ENCODE measurements at regions of chr7 and their contacts with region 1.

Region 1: DNA sequence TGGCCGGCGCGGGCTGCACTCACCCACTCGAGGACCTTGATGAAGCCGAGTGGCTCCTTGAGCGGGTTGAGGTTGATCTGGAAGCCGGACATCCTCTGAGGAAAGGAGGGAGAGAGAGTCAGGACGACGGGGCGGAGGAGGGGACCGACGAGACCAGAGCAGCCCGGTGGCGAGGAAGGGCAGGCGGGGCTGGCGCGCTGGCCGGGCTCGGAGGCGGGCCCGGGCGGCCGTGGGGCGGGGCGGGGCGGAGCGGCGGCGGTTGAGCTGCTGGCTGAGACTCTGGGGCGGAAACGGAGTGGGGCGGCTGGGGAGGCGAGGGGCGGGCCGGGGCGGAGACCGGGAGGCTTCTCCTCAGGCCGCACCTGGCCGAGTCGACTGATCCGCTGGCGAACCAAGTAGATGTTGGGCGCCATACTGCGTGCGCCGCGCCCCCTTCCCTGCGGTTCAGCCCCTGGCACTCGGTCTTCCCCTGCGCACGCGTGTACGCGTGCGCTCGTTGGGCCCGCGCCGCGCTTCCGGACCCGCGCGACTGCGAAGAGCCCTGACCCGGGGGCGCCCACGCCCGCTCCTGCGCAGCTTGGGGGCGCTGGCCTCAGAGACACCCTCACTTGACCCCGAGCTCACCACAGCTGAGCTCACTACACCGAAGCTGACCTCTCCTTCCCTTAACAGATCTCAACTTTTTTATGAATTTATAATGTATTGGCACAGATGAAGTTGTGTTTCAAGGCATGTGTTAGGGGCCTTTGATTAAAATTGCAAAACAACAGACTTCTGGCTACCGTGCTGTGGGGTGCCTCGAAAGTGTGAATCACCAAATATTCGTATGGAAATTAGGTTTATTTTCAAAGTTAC is at the start of gene SYPL1:
- DNase-seq: peak; percentile 96
- H3K4me3 ChIP-seq: peak within 1 kb of the TSS; percentile 80
- H3K27ac ChIP-seq: peak within 1 kb of the TSS; percentile 83
- H3K4me1 ChIP-seq: peaks cover 62% of the 10 kb centered on the region
- CTCF ChIP-seq: peak; percentile 52; the same call in 1 of the 2 replicates
- total RNA-seq, gene SYPL1: 30.4 and 34.1 TPM in 2 replicates

Region 2: DNA sequence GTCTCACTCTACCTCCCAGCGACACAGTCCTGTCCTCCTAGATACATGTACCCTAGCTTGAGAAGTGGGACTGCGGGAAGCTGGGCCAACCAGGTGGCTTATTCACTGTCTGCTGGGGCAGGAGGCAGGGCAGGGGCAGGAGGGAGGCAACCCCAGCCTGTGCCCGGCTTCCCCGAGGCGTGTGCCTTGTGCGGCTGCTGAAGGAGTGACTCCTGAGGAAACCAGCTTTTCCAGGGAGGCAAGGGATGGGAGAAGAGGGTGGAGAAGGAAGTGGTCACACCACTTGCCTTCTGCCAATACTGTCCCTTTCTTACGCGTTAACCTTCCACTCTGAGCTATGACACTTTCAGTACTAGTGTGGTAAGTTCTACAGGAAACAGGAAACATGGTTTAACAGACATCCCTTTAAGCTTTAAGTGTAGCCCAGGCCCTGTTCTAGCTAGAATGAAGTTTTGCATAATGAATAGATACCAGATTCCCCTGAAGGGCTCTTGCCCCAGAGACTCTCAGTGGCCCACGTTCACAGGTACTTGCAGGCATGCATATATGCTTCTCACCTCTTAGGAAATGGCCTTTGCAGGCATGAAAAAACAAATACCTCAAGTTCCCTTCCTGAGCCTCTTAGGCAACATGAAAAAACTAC is 40.9 kb before region 1 on chr7:
- CTCF ChIA-PET with region 1: interaction called, 7 read pairs
- POLR2A ChIA-PET with region 1: interaction called, 297 read pairs
- intact Hi-C with region 1: loop called (anchors 1 kb)
- DNase-seq: peak; percentile 96
- H3K4me3 ChIP-seq: peak overlapping the region; percentile 70
- H3K27ac ChIP-seq: peak overlapping the region; percentile 96
- H3K4me1 ChIP-seq: peaks cover 98% of the 10 kb centered on the region
- CTCF ChIP-seq: no peak

Region 3: DNA sequence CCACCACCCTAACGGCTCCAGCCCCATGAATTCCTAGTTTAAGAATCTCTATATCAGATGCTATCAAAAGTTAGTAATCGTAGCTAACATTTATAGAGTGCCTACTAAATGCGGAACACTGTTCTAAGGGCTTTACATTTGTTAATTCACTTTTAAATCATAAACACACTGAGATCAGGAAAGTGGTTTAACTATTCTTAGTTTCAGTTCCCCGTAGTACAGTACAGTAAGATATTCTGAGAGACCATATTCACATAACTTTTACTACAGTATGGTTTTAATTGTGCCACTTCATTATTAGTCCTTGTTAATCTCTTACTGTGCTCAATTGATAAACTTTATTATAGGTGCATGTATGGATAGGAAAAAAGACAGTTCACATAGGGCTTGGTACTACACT is 22.7 kb before region 1 on chr7:
- CTCF ChIA-PET with region 1: interaction called, 3 read pairs
- POLR2A ChIA-PET with region 1: interaction called, 17 read pairs
- intact Hi-C with region 1: no loop called
- DNase-seq: peak; percentile 66
- H3K4me3 ChIP-seq: peak overlapping the region; percentile 38
- H3K27ac ChIP-seq: peak overlapping the region; percentile 87
- H3K4me1 ChIP-seq: peaks cover 76% of the 10 kb centered on the region
- CTCF ChIP-seq: no peak

Measured in OCI-LY7 (cell line).